ENCODE measurements at regions of chr14 and their contacts with region 1.

Region 1: DNA sequence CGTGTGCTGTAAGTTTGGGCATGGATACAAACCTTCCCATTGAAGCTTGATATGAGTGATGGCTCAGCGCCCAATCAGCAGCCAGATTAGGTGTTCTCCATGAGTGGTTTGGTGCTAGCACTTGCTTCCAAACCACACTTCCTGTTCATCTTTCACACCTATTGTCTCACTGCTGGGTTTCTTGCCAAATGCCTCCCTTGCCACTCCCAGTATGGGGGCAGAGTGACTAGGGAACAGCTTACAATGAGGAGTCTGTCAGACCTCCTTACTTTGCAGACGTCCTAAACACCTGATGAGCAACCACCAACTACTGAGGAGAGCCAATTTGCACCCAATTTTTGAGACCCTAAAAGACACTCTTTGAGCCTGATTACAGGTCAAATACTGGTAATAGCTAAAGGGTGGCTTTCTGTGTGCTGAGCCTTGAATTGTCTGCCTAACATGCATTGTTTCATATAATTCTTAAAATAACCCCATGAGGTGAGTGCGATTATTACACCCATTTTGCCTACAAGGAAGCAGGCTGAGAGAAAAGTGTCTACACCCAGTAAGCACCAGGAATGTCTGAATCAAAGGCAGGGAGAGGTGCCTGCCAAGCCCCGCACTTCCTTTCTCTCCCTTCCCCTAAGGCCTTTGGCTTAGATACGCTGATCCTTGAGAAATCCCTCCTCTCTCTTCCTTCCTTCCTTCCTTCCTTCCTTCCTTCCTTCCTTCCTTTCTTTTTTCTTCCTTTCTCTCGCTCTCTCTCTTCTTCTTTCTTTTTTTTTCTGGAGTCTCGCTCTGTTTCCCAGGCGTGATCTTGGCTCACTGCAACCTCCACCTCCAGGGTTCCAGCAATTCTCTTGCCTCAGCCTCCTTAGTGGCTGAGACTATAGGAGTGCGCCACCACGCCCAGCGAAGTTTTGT is 48.2 kb upstream of the FOS start:
- DNase-seq: no peak
- H3K4me3 ChIP-seq: no peak overlapping the region
- H3K27ac ChIP-seq: no peak overlapping the region
- H3K4me1 ChIP-seq: no peaks in the 10 kb centered on the region
- H3K27me3 ChIP-seq: no peaks in the 10 kb centered on the region
- CTCF ChIP-seq: no peak
- EP300 ChIP-seq: no peak
- POLR2A ChIP-seq: no peak
- RAD21 ChIP-seq: no peak

Region 2: GRCh38 chr14:75119056-75119455 is 111.3 kb before region 1 on chr14:
- CTCF ChIA-PET with region 1: no interaction called
- POLR2A ChIA-PET with region 1: no interaction called
- DNase-seq: no peak
- H3K4me3 ChIP-seq: no peak overlapping the region
- H3K27ac ChIP-seq: no peak overlapping the region
- H3K4me1 ChIP-seq: no peaks in the 10 kb centered on the region
- H3K27me3 ChIP-seq: no peaks in the 10 kb centered on the region
- CTCF ChIP-seq: no peak
- EP300 ChIP-seq: no peak
- POLR2A ChIP-seq: no peak
- RAD21 ChIP-seq: no peak

Region 3: DNA sequence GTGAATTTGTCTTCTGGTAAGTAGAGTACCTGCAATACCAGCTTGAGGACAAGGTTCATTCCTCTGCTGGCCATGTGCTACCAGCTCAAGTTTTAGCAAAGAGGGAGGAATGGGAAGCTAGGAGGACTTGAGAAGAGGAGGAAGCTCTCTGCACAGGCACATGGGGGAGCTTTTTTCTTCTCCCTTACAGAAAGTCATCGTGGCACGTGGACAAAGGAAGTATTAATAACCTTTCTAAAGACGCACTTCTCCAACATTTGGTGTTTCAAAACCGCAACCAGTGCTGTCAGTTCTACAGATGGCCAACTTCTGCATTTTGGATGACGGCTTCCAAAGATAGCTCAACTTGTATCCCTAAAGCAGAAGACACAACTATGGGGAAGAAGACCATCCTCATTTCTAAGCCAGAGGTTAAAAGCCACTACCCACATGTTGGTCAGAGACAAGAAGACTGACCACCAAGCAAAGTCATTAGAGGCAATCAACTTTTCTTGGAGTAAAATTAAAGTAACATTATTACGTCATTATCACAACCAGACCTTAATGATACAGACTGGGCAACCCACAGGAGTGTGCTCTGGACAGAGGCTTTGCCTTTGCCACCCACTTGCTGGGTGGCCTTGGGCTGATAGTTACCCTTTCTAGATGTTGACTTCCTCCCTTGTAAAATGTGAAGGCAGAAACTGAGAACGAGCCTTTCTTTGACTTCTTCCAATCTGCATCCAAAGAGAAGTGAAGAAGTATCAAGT is 41.7 kb before region 1 on chr14:
- CTCF ChIA-PET with region 1: no interaction called
- POLR2A ChIA-PET with region 1: no interaction called
- DNase-seq: no peak
- H3K4me3 ChIP-seq: no peak overlapping the region
- H3K27ac ChIP-seq: no peak overlapping the region
- H3K4me1 ChIP-seq: no peaks in the 10 kb centered on the region
- H3K27me3 ChIP-seq: no peaks in the 10 kb centered on the region
- CTCF ChIP-seq: no peak
- EP300 ChIP-seq: no peak
- POLR2A ChIP-seq: no peak
- RAD21 ChIP-seq: no peak

Region 4: DNA sequence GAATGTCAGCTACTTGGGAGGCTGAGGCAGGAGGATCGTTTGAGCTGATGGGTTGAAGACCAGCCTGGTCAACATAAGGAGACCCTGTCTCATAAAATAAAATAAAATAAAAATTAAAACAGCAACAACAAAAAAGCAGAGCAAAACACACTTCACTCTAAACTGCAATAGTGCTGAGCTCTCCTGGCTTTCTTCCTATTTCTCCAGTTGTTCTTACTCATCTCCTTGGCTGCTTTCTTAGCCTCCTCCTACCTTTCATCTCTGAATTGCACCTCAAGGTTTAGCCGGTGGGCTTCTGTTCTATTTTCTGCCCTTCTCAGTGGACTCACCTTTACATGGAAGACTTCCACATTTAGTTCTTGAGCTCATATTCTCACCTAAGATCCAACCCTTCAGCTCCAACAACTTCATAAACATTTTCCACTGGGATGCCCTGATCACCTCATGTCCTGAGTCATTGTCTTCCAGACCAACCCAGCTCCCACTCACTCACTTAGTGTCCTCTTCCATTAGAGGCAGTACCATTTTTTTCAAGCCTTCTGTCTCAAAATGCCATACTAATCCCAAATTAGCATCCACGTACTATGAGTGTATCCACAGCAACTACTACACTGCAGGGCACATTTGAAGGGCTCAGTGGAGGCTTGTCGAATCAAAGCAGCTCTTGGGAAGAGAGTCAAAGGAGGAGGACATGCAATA is 12.7 kb before region 1 on chr14:
- CTCF ChIA-PET with region 1: interaction called, 17 read pairs
- POLR2A ChIA-PET with region 1: interaction called, 5 read pairs
- DNase-seq: no peak
- H3K4me3 ChIP-seq: no peak overlapping the region
- H3K27ac ChIP-seq: no peak overlapping the region
- H3K4me1 ChIP-seq: peaks cover 0 to 8% (median 5%) of the 10 kb centered on the region in 4 experiments; a peak in 5 of 7 replicates
- H3K27me3 ChIP-seq: no peaks in the 10 kb centered on the region
- CTCF ChIP-seq: no peak
- EP300 ChIP-seq: no peak
- POLR2A ChIP-seq: no peak
- RAD21 ChIP-seq: no peak